Activated naive CD4-positive, alpha-beta T cell treated with anti-CD3 and anti-CD28 coated beads for 36 hours (primary cell): ENCODE measurements at regions of chrX and their contacts with region 1.

Region 1: GRCh38 chrX:14051416-14051815 is 21.7 kb upstream of the GEMIN8 start:
- DNase-seq: no peak
- H3K4me3 Mint-ChIP-seq: no peak overlapping the region
- H3K27ac Mint-ChIP-seq: no peak overlapping the region
- H3K4me1 Mint-ChIP-seq: no peaks in the 10 kb centered on the region
- H3K27me3 Mint-ChIP-seq: peaks cover 3% of the 10 kb centered on the region

Region 2: GRCh38 chrX:13334491-13334890 is 716.9 kb before region 1 on chrX:
- CTCF ChIA-PET with region 1: no interaction called
- intact Hi-C with region 1: loop called (anchors 5 kb)
- DNase-seq: no peak
- H3K4me3 Mint-ChIP-seq: no peak overlapping the region
- H3K27ac Mint-ChIP-seq: no peak overlapping the region
- H3K4me1 Mint-ChIP-seq: no peaks in the 10 kb centered on the region
- H3K27me3 Mint-ChIP-seq: no peaks in the 10 kb centered on the region